ENCODE measurements at regions of chr2 and their contacts with region 1.

Region 1: DNA sequence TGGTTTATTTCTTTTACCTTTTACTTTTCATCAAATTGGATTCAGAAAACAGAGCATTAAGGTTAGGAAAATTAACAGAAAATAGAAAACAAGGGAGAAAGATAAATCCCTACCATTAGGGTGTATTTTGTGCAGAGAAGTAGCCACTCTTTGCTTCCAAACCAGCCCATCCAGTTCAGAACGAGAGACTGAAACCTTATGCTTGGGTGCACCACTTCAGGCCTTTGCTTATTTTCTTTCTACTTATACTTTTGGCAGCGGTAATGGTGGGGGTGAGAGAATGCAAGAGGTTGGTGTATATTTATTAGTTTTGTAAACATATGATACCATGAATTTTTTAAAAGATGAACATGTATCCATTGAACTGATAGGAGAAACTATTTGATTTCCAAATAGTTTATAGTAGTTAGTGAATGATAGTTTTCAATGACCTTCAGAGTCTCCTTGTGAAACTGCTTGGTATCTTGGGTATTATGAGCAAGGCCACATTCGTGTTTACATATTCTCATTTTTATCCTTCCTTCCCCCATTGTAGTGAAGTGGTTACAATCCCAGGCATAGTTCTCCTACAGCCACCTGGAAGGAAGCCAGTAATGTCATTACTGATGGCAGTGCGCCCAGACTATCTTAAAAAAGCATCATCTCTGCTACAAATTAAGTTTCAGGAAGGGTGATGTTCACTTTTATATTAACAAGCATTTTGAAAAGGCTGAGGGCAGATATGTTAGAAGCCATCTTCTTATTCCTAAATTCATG is 60.8 kb downstream of the MFSD6 start:
- DNase-seq: peak; percentile 95
- H3K4me3 Mint-ChIP-seq: no peak overlapping the region
- H3K27ac Mint-ChIP-seq: peak overlapping the region; percentile 86
- H3K4me1 Mint-ChIP-seq: peaks cover 22% of the 10 kb centered on the region
- H3K27me3 Mint-ChIP-seq: no peaks in the 10 kb centered on the region
- CTCF ChIP-seq: no peak

Region 2: DNA sequence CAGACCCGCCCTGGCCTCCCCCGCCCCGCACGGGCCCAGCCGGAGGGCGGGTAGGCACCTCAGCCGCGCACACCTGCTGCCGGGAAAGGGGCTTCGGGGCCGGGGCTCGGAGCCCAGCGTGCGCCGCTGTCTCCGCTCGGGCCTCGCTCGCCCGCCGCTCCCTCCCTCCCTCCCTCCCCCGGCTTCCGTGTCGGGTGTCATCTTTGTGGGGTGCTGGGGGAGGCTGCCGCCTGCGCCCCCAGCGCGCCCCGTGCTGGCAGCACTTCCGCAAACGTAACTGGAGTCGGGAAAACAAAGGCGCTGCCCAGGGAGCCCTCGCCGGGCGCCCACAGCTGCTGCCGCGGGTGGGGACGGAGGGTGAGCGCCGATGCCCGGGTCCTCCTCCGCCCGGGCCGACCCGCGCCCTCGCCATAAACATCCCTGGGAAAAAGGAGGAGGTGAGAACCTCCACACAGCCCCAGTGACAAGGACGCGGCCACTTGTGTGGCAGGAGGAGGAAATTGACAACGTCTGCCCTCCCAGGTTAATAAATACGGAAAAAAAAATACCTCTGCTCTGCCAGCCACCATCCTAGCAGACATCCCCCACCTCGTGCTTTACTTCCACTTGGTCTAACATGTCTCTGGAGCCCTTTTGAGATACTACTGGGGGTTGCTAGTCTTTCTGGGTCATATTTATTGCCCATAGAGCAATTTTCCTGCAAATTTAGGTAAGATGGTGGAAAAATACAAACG is 60.3 kb before region 1 on chr2:
- CTCF ChIA-PET with region 1: interaction called, 4 read pairs
- POLR2A ChIA-PET with region 1: interaction called, 6 read pairs
- intact Hi-C with region 1: loop called (anchors 5 kb)
- DNase-seq: peak; percentile 46
- H3K4me3 Mint-ChIP-seq: peak overlapping the region; percentile 72
- H3K27ac Mint-ChIP-seq: peak overlapping the region; percentile 13
- H3K4me1 Mint-ChIP-seq: peaks cover 18% of the 10 kb centered on the region
- H3K27me3 Mint-ChIP-seq: no peaks in the 10 kb centered on the region
- CTCF ChIP-seq: no peak